Activated CD4-positive, alpha-beta T cell treated with anti-CD3 and anti-CD28 coated beads, Interleukin-2, amount 10 ng/mL, durations not matched to agents 7 days and 5 days (primary cell): ENCODE measurements at regions of chr6 and their contacts with region 1.

Region 1: DNA sequence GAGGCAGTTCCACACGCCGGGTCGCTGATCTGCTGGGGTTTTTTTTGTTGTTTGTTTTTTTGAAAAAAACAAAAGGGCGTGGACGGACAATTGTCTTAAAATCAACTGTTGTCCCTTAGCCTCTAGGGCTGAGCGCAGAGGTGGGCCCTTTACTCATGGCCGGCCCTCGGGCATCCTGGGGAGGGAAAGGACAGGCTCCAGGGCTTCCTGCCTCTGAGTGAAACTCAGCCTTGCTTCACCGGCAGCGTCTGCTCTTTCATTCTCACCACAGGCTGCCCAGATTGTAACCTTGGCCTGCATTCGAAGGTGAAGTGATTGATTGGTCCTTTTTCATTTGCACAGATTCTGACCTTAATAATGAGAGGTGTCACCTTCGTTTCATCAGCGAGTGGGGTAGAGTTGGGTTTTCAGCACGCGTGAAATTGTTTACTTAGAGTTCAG is 797 bp downstream of the SMIM13 start:
- DNase-seq: peak; percentile 59
- H3K4me3 Mint-ChIP-seq: peak overlapping the region; percentile 84
- H3K27ac Mint-ChIP-seq: peak overlapping the region; percentile 94
- H3K4me1 Mint-ChIP-seq: peaks cover 35% of the 10 kb centered on the region
- H3K27me3 Mint-ChIP-seq: no peaks in the 10 kb centered on the region

Region 2: GRCh38 chr6:11110921-11111768 is 16.7 kb after region 1 on chr6 and contains the start of gene ERVFRD-1:
- CTCF ChIA-PET with region 1: interaction called, 11 read pairs
- POLR2A ChIA-PET with region 1: interaction called, 6 read pairs
- DNase-seq: no peak
- H3K4me3 Mint-ChIP-seq: peak within 1 kb of the TSS; percentile 43
- H3K27ac Mint-ChIP-seq: no peak within 1 kb of the TSS
- H3K4me1 Mint-ChIP-seq: peaks cover 21% of the 10 kb centered on the region
- H3K27me3 Mint-ChIP-seq: no peaks in the 10 kb centered on the region
- total RNA-seq, gene ERVFRD-1: not detected